Activated CD4-positive, alpha-beta T cell treated with anti-CD3 and anti-CD28 coated beads for 36 hours (primary cell): ENCODE measurements at regions of chr18 and their contacts with region 1.

Region 1: DNA sequence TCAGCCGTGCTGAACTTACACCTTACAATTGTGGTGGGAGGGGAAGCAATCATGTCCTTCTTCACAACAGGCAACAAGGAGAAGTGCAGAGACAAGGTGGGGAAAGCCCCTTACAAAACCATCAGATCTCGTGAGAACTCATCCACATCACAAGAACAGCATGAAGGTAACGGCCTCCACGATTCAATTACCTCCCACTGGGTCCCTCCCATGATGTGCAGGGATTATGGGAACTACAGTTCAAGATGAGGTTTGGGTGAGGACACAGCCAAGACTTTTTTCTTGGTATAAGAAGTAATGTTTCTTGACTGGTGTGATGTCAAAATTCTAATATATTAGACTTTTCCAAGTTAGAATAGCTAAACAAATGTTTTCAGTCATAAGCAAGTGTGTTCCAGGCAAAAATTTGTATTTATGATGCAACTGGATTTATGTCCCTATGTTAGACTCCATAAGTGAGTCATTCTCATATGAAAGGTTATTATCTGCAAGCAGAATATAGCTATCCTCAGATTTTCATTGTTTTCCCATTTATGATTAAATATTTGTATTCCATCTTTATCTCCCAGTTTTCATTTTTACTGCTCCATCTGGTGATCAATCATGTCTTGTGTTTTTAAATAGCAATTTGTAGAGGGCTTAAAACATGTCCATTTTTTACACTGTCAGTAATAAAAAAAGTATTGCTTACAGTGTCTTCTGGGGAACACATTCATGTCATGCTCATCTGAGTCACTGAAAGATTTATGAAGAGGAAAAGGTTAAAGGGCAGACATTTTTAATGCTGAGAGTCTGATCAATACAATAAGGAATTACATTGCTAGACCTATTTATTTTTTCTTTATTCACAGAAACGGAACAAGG is 995.2 kb upstream of the CDH2 start:
- DNase-seq: no peak
- ATAC-seq: no peak
- H3K4me3 Mint-ChIP-seq: no peak overlapping the region
- H3K27ac Mint-ChIP-seq: no peak overlapping the region
- H3K4me1 Mint-ChIP-seq: no peaks in the 10 kb centered on the region
- H3K27me3 Mint-ChIP-seq: no peaks in the 10 kb centered on the region

Region 2: DNA sequence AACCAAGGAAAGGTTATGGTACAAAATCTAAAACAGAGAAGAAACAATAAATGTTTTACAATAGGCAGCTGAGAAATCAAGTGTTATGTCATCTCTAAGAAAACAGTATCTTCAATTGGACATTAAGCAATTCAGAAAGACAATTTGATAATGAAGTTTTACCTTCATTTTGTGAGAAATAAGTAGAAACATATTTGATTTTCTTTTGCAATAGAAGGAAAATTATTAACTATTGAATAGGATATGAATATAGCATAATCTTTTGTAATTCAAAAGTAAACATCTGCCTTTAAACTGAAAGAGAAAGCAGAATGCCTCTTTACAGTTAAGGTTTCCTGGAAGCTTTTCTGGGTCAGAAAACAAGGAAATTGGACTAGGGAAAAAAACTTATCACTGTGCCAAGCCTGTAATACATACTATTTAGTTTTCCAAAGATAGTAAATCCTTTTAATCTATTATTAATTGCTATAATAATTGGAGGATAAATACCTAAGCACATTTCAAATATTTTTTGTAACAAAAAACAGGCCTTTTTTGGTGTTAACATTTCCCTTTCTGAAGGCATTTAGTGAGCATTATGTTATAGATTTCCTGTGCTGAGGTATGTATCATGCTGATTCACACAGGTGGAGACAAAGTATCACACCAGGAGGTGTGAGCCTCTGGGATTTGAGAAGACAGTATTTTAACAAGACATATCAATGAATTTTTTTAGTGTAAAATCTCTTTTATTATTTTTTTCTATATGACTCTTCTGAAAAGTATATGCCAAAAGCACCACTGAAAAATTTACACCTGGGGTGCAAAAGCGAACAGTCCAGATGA is 48.2 kb before region 1 on chr18:
- CTCF ChIA-PET with region 1: no interaction called
- POLR2A ChIA-PET with region 1: no interaction called
- intact Hi-C with region 1: loop called in 1 of 2 experiments (anchors 10 kb)
- DNase-seq: no peak
- ATAC-seq: no peak
- H3K4me3 Mint-ChIP-seq: no peak overlapping the region
- H3K27ac Mint-ChIP-seq: no peak overlapping the region
- H3K4me1 Mint-ChIP-seq: no peaks in the 10 kb centered on the region
- H3K27me3 Mint-ChIP-seq: no peaks in the 10 kb centered on the region